Transverse colon (tissue), 4 donors: ENCODE measurements at regions of chr14 and their contacts with region 1.

Region 1: GRCh38 chr14:101774006-101774795 is 12.7 kb downstream of the PPP2R5C start:
- DNase-seq: no peak
- H3K4me3 ChIP-seq: no peak overlapping the region
- H3K27ac ChIP-seq: no peak overlapping the region
- H3K4me1 ChIP-seq: peaks cover 0 to 6% (median 3%) of the 10 kb centered on the region in 4 donors
- H3K27me3 ChIP-seq: no peaks in the 10 kb centered on the region
- CTCF ChIP-seq: no peak
- EP300 ChIP-seq: no peak
- POLR2A ChIP-seq: no peak

Region 2: DNA sequence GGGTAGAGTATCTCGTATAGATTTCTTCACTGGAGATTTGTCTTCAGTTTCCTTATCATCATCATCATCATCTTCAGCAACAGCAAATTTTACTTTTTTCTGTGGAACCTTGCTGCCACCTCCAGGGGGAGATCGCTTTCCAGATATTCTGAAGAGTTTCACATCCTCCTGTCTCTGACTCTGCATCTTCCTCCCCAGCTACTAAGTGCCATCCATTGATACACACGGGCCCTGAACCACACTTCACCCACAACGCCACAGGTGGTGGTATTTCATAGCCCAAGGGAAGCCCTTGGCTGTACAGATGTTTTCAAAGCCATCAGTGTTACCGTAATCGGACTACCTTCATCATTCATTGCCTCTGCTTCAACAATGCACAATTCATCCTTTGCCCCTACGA is 69.5 kb after region 1 on chr14:
- in situ Hi-C with region 1: loop called in 1 of 4 experiments (anchors 10 kb)
- intact Hi-C with region 1: loop called (anchors 10 kb)
- DNase-seq: peak; percentile 44
- H3K4me3 ChIP-seq: no peak overlapping the region
- H3K27ac ChIP-seq: no peak overlapping the region
- H3K4me1 ChIP-seq: peaks cover 2 to 18% (median 8%) of the 10 kb centered on the region in 4 donors
- H3K27me3 ChIP-seq: no peaks in the 10 kb centered on the region
- CTCF ChIP-seq: peak in 4 of 5 experiments; percentile 12 to 47 (median 26)
- EP300 ChIP-seq: no peak
- POLR2A ChIP-seq: no peak

Region 3: GRCh38 chr14:101889898-101890297 is 115.7 kb after region 1 on chr14:
- in situ Hi-C with region 1: no loop called
- intact Hi-C with region 1: loop called (anchors 10 kb)
- DNase-seq: peak; percentile 5
- H3K4me3 ChIP-seq: no peak overlapping the region
- H3K27ac ChIP-seq: no peak overlapping the region
- H3K4me1 ChIP-seq: peaks cover 0 to 11% (median 7%) of the 10 kb centered on the region in 4 donors
- H3K27me3 ChIP-seq: no peaks in the 10 kb centered on the region
- CTCF ChIP-seq: peak in 1 of 5 experiments; percentile 15
- EP300 ChIP-seq: no peak
- POLR2A ChIP-seq: no peak

Region 4: GRCh38 chr14:101947906-101948665 is 173.9 kb after region 1 on chr14:
- in situ Hi-C with region 1: loop called in 2 of 4 experiments (anchors 10 to 25 kb)
- intact Hi-C with region 1: no loop called
- DNase-seq: peak; percentile 100
- H3K4me3 ChIP-seq: peak overlapping the region; percentile 58 to 92 (median 68)
- H3K27ac ChIP-seq: peak overlapping the region; percentile 88 to 99 (median 98)
- H3K4me1 ChIP-seq: peaks cover 3 to 21% (median 17%) of the 10 kb centered on the region in 4 donors
- H3K27me3 ChIP-seq: peaks cover 10% of the 10 kb centered on the region
- CTCF ChIP-seq: no peak
- EP300 ChIP-seq: peak; percentile 54
- POLR2A ChIP-seq: peak; percentile 96

Region 5: GRCh38 chr14:101964297-101965144 is 190.3 kb after region 1 on chr14 and contains the start of gene DYNC1H1:
- in situ Hi-C with region 1: no loop called
- intact Hi-C with region 1: loop called (anchors 5 kb)
- DNase-seq: peak; percentile 92
- H3K4me3 ChIP-seq: peak within 1 kb of the TSS; percentile 87 to 99 (median 94)
- H3K27ac ChIP-seq: peak within 1 kb of the TSS; percentile 96 to 99 (median 98)
- H3K4me1 ChIP-seq: peaks cover 8 to 51% (median 29%) of the 10 kb centered on the region in 4 donors
- H3K27me3 ChIP-seq: no peaks in the 10 kb centered on the region
- CTCF ChIP-seq: no peak
- EP300 ChIP-seq: no peak
- POLR2A ChIP-seq: peak; percentile 97
- total RNA-seq, gene DYNC1H1: 471 to 647 (median 482) TPM

Region 6: GRCh38 chr14:102071283-102071998 is 297.2 kb after region 1 on chr14:
- in situ Hi-C with region 1: no loop called
- intact Hi-C with region 1: no loop called
- DNase-seq: no peak
- H3K4me3 ChIP-seq: no peak overlapping the region
- H3K27ac ChIP-seq: no peak overlapping the region
- H3K4me1 ChIP-seq: no peaks in the 10 kb centered on the region
- H3K27me3 ChIP-seq: no peaks in the 10 kb centered on the region
- CTCF ChIP-seq: no peak
- EP300 ChIP-seq: no peak
- POLR2A ChIP-seq: no peak

Region 7: DNA sequence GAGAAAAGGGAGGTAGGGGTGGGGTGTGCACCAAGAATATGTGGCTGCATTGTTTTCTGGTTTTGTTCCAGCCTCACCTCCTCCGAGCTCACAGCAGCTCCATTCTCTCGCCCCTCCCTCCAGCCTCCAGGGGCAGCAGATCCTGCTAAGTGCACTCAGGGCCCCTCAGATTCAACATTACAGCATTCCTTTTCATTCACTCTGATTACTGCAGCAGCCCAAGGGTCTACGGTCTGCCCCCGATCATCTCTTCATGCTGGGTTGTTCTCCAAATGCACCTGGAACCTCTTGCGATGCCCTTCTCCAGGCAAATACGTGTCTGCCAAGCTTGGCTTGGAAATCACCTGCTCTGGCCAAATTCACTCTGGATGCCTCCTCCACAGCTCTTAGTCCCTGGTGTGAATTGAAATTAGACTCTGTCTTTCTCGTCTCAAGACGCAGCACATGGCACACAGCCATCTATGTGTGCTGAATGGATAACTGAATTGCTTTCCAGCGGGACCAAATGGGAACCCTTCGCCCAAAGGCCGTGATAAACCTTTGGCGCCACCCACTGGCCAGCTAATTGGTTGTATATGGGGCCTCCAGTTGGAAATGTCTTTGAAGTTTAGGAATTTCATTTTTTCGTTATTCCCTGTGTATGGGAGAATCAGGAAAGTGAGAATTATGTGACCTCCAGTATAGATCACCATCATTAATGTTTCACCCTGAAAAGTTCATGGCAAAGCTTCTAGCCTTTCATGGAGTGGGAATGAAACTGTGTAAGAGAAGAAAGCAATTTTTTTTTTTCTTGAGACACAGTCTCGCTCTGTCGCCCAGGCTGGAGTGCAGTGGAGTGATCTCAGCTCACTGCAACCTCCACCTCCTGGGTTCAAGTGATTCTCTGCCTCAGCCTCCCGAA is 322.3 kb after region 1 on chr14:
- in situ Hi-C with region 1: no loop called
- intact Hi-C with region 1: no loop called
- DNase-seq: peak; percentile 89
- H3K4me3 ChIP-seq: no peak overlapping the region
- H3K27ac ChIP-seq: no peak overlapping the region
- H3K4me1 ChIP-seq: peaks cover 0 to 19% (median 8%) of the 10 kb centered on the region in 4 donors
- H3K27me3 ChIP-seq: no peaks in the 10 kb centered on the region
- CTCF ChIP-seq: peak; percentile 77 to 83 (median 79)
- EP300 ChIP-seq: no peak
- POLR2A ChIP-seq: no peak